ENCODE measurements at regions of chr3 and their contacts with region 1.

Region 1: DNA sequence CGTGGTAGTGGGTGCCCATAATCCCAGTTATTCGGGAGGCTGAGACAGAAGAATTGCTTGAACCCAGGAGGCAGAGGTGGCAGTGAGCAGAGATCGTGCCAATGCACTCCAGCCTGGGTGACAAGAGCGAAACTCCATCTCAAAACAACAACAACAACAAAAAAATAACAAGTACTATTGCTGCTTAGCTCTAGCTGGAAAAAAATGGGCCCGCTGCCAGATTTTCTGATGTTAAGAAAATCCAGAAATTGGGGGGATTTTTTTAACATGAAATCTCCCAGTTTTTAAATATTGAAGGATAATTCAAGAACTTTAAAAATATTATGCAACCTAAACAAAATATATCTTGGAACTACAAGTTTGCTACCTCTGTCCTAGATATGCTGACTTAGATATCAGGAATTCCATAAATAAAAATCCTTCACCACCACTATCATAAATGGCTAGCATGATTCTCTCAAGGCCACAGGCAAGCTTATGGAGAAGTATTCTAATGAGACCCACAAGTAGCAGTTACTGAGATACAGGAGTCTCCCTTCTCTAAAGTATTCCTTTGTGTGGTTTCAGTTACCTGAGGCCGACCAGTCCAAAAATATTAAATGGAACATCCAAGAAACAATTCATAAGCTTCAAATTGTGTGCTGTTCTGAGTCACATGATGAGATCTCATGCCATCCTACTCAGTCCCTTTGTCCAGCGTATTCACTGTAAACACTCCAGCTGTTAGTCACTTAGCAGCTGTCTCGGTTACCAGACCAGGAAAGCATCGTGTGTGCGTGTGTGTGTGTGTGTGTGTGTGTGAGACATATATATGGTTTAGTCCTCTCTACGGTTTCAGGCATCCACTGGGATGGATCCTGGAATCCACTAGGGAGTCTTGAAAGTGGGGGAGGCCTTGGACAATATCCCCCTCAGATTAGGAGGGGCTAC is 277.2 kb downstream of the TBL1XR1 start:
- DNase-seq: no peak
- ATAC-seq: no peak
- H3K4me3 ChIP-seq: no peak overlapping the region
- H3K4me3 Mint-ChIP-seq: no peak overlapping the region
- H3K27ac ChIP-seq: no peak overlapping the region
- H3K27ac Mint-ChIP-seq: no peak overlapping the region
- H3K4me1 ChIP-seq: no peaks in the 10 kb centered on the region
- H3K4me1 Mint-ChIP-seq: no peaks in the 10 kb centered on the region
- H3K27me3 ChIP-seq: no peaks in the 10 kb centered on the region
- H3K27me3 Mint-ChIP-seq: peaks cover 11 to 15% of the 10 kb centered on the region in 2 donors

Region 2: GRCh38 chr3:176933704-176934103 is 13.6 kb after region 1 on chr3:
- CTCF ChIA-PET with region 1: no interaction called
- POLR2A ChIA-PET with region 1: interaction called in 1 of 2 experiments, 11 read pairs
- DNase-seq: no peak
- ATAC-seq: no peak
- H3K4me3 ChIP-seq: no peak overlapping the region
- H3K4me3 Mint-ChIP-seq: no peak overlapping the region
- H3K27ac ChIP-seq: no peak overlapping the region
- H3K27ac Mint-ChIP-seq: no peak overlapping the region
- H3K4me1 ChIP-seq: no peaks in the 10 kb centered on the region
- H3K4me1 Mint-ChIP-seq: no peaks in the 10 kb centered on the region
- H3K27me3 ChIP-seq: no peaks in the 10 kb centered on the region
- H3K27me3 Mint-ChIP-seq: peaks cover 9 to 17% of the 10 kb centered on the region in 2 donors

Measured in T-cell (primary cell).